CD14-positive monocyte (primary cell): ENCODE measurements at regions of chr16 and their contacts with region 1.

Region 1: GRCh38 chr16:72856797-72857196 is 191.1 kb downstream of the ZFHX3 start:
- DNase-seq: peak in 1 of 3 donors; percentile 20
- H3K4me3 ChIP-seq: no peak overlapping the region
- H3K4me3 Mint-ChIP-seq: no peak overlapping the region
- H3K27ac ChIP-seq: no peak overlapping the region
- H3K27ac Mint-ChIP-seq: no peak overlapping the region
- H3K4me1 ChIP-seq: peaks cover 34 to 35% of the 10 kb centered on the region in 2 donors
- H3K4me1 Mint-ChIP-seq: peaks cover 35% of the 10 kb centered on the region
- H3K27me3 ChIP-seq: no peaks in the 10 kb centered on the region
- H3K27me3 Mint-ChIP-seq: peaks cover 0 to 1% (median 0%) of the 10 kb centered on the region in 3 donors
- CTCF ChIP-seq: peak; percentile 53

Region 2: GRCh38 chr16:72875291-72876033 is 18.7 kb after region 1 on chr16:
- intact Hi-C with region 1: loop called in 1 of 2 experiments (anchors 2 kb)
- DNase-seq: peak in 2 of 3 donors; percentile 24 to 35
- H3K4me3 ChIP-seq: no peak overlapping the region
- H3K4me3 Mint-ChIP-seq: no peak overlapping the region
- H3K27ac ChIP-seq: peak overlapping the region in 1 of 2 donors; percentile 12
- H3K27ac Mint-ChIP-seq: peak overlapping the region in 4 of 7 donors; percentile 30 to 74 (median 50)
- H3K4me1 ChIP-seq: peaks cover 20 to 32% of the 10 kb centered on the region in 2 donors
- H3K4me1 Mint-ChIP-seq: peaks cover 40% of the 10 kb centered on the region
- H3K27me3 ChIP-seq: no peaks in the 10 kb centered on the region
- H3K27me3 Mint-ChIP-seq: peaks cover 0 to 1% (median 0%) of the 10 kb centered on the region in 3 donors
- CTCF ChIP-seq: no peak